PC-3 (cell line): ENCODE measurements at regions of chr4 and their contacts with region 1.

Region 1: GRCh38 chr4:83012687-83013419 is 2.2 kb upstream of the LIN54 start:
- DNase-seq: peak; percentile 97
- ATAC-seq: peak; percentile 76
- H3K4me3 ChIP-seq: peak overlapping the region; percentile 99
- H3K27ac ChIP-seq: peak overlapping the region; percentile 66
- H3K4me1 ChIP-seq: peaks cover 19% of the 10 kb centered on the region
- H3K27me3 ChIP-seq: no peaks in the 10 kb centered on the region
- CTCF ChIP-seq: 0 out of 2 replicates have a peak, but pooled peaks have one; percentile 16

Region 2: DNA sequence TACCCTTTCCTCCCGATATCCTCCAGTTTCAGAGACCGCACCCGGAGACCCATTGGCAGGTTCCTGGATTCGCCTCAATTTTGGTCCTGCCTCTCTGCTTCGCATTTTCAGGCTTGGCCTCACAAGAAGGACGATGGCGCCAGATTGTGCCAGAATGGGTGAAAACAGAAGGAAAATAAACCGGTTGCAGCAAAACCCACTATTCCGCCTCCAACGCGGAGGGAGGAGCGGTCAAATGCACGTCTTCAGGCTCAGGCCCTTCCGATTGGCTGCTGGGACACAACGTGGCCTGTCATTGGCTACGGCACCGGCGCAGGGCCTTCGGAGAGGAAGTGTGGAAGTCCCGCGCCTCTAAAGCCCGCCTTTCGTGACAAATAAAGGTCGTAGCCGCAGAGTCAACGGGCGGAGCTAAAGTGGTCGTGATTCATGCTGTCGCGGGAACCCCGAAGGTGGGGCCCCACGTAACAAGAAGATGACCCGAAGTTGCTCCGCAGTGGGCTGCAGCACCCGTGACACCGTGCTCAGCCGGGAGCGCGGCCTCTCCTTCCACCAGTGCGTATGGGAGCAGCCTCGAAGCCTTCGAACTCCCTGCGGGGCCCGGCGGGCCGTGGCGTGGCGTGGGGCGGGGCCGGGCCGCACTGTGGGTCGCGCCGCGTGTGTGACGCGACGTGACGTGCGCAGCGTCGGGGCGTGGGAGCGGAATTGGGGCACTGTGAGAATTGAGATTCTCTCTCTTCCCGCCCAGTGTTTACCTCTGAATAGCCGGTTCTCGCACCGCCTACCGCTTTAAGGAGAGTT is 112.3 kb before region 1 on chr4 and contains the start of gene THAP9:
- CTCF ChIA-PET with region 1: no interaction called
- POLR2A ChIA-PET with region 1: interaction called, 6 read pairs
- intact Hi-C with region 1: loop called (anchors 2 kb)
- DNase-seq: peak; percentile 98
- ATAC-seq: peak; percentile 92
- H3K4me3 ChIP-seq: peak within 1 kb of the TSS; percentile 79
- H3K27ac ChIP-seq: peak within 1 kb of the TSS; percentile 97
- H3K4me1 ChIP-seq: peaks cover 25% of the 10 kb centered on the region
- H3K27me3 ChIP-seq: no peaks in the 10 kb centered on the region
- CTCF ChIP-seq: no peak
- total RNA-seq, gene THAP9: 3.2 and 3.3 TPM in 2 replicates

Region 3: GRCh38 chr4:83189631-83190136 is 176.8 kb after region 1 on chr4:
- CTCF ChIA-PET with region 1: no interaction called
- POLR2A ChIA-PET with region 1: no interaction called
- intact Hi-C with region 1: no loop called
- DNase-seq: no peak
- ATAC-seq: no peak
- H3K4me3 ChIP-seq: no peak overlapping the region
- H3K27ac ChIP-seq: no peak overlapping the region
- H3K4me1 ChIP-seq: no peaks in the 10 kb centered on the region
- H3K27me3 ChIP-seq: no peaks in the 10 kb centered on the region
- CTCF ChIP-seq: no peak

Region 4: DNA sequence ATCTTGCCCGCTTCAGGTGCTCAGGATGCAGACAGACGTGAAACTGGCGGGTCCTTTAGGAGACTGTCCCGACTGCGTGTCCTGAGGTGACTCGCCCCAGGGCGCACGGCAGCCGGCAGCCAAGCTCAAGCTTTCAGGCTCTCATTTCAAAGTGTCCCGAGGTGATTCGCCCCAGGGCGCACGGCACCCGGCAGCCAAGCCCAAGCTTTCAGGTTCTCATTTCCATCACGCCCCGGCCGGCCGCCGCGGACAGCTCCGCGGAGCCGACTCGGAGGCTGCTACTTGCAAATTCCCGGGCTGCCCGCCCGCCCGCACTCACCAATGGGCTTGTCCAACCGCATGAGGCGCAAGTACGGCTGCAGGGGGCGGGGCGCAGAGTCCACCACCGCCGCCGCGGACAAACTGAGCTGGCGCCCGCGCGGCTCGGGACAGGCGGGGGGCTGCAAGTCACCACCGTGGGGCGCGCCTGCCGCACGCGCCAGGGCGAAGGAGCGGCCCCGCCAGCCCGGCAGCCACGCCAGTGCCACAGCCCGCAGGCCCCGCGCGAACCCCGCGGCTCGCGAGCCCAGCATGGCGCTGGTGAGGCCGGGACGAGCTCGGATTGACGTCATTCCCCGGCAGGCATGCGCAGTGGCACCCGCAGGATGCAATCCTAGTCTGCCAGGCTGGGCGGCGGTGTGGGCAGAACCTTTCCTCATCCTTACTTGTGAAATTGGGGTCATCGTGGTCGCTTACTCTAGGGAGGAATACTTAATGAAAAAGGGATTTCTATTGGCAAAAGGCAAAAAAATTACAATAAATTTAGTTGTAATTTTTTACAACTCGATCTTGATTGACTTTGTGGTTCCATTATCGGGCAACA is 271.6 kb after region 1 on chr4 and contains the start of gene COQ2:
- CTCF ChIA-PET with region 1: interaction called, 6 read pairs
- POLR2A ChIA-PET with region 1: no interaction called
- intact Hi-C with region 1: loop called (anchors 1 kb)
- DNase-seq: peak; percentile 87
- ATAC-seq: peak; percentile 86
- H3K4me3 ChIP-seq: peak within 1 kb of the TSS; percentile 91
- H3K27ac ChIP-seq: peak within 1 kb of the TSS; percentile 81
- H3K4me1 ChIP-seq: peaks cover 27% of the 10 kb centered on the region
- H3K27me3 ChIP-seq: no peaks in the 10 kb centered on the region
- CTCF ChIP-seq: 0 out of 2 replicates have a peak, but pooled peaks have one; percentile 15
- total RNA-seq, gene COQ2: 22.0 and 23.8 TPM in 2 replicates